Gastrocnemius medialis (tissue), 4 donors: ENCODE measurements at regions of chr15 and their contacts with region 1.

Region 1: GRCh38 chr15:98177924-98178592 is 217.6 kb downstream of the ARRDC4 start:
- DNase-seq: peak in 1 of 2 donors; percentile 3
- ATAC-seq: peak; percentile 60 to 69
- H3K4me3 ChIP-seq: no peak overlapping the region
- H3K27ac ChIP-seq: no peak overlapping the region
- H3K4me1 ChIP-seq: no peaks in the 10 kb centered on the region
- H3K27me3 ChIP-seq: peaks cover 5 to 19% (median 7%) of the 10 kb centered on the region in 3 donors
- CTCF ChIP-seq: peak; percentile 17 to 52 (median 37)
- POLR2A ChIP-seq: no peak

Region 2: DNA sequence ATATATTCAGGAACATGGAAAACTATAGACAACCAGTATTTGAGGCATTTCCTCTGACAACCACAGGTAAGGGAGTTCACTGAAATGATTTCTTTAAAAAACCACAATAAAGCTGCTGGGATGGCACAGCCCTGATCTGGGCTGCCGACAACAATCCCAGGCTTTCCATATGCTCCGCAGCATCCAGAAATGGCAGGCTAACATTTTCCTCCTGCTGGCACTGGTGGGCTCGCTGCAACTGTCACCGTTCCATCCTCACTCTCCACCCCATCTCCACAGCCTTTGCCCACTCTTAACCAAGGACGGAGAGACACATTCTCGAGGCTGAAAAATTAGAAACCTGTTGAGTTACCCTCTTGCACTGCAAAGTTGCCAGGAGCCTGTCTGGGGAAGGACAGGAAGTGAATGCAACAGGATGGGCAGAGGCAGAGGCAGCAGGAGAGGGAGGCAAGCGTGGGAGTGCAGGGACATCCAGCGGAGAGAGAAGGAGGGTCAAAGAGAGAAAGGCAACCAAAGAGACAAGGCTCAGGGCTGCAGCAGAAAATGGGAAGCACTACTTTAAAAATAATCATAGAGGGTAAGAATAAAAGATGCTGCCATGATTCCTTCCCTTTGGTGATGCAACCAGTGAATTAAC is 296.6 kb before region 1 on chr15:
- in situ Hi-C with region 1: loop called in 1 of 4 experiments (anchors 10 kb)
- intact Hi-C with region 1: no loop called
- DNase-seq: no peak
- ATAC-seq: no peak
- H3K4me3 ChIP-seq: no peak overlapping the region
- H3K27ac ChIP-seq: no peak overlapping the region
- H3K4me1 ChIP-seq: no peaks in the 10 kb centered on the region
- H3K27me3 ChIP-seq: no peaks in the 10 kb centered on the region
- CTCF ChIP-seq: no peak
- POLR2A ChIP-seq: no peak